ENCODE measurements at regions of chr1 and their contacts with region 1.

Region 1: GRCh38 chr1:67561704-67562113 is 123.3 kb upstream of the GADD45A start:
- DNase-seq: peak; percentile 54 to 98
- H3K4me3 ChIP-seq: no peak overlapping the region
- H3K27ac ChIP-seq: no peak overlapping the region
- H3K4me1 ChIP-seq: no peaks in the 10 kb centered on the region
- H3K27me3 ChIP-seq: no peaks in the 10 kb centered on the region
- CTCF ChIP-seq: peak; percentile 86 to 92 (median 91)
- EP300 ChIP-seq: no peak
- POLR2A ChIP-seq: no peak
- RAD21 ChIP-seq: peak; percentile 94 to 95

Region 2: GRCh38 chr1:67323087-67323486 is 238.6 kb before region 1 on chr1:
- CTCF ChIA-PET with region 1: no interaction called
- POLR2A ChIA-PET with region 1: no interaction called
- DNase-seq: no peak
- H3K4me3 ChIP-seq: no peak overlapping the region
- H3K27ac ChIP-seq: no peak overlapping the region
- H3K4me1 ChIP-seq: peaks cover 0 to 3% (median 0%) of the 10 kb centered on the region in 4 experiments; a peak in 1 of 7 replicates
- H3K27me3 ChIP-seq: no peaks in the 10 kb centered on the region
- CTCF ChIP-seq: no peak
- EP300 ChIP-seq: no peak
- POLR2A ChIP-seq: no peak
- RAD21 ChIP-seq: no peak

Region 3: GRCh38 chr1:67524143-67525052 is 37.3 kb before region 1 on chr1:
- CTCF ChIA-PET with region 1: interaction called, 24 read pairs
- POLR2A ChIA-PET with region 1: no interaction called
- DNase-seq: no peak
- H3K4me3 ChIP-seq: no peak overlapping the region
- H3K27ac ChIP-seq: no peak overlapping the region
- H3K4me1 ChIP-seq: no peaks in the 10 kb centered on the region
- H3K27me3 ChIP-seq: peaks cover 14 to 36% (median 22%) of the 10 kb centered on the region in 4 experiments
- CTCF ChIP-seq: peak in 2 of 3 experiments; percentile 5 to 48; a peak in 2 of 4 replicates
- EP300 ChIP-seq: no peak
- POLR2A ChIP-seq: no peak
- RAD21 ChIP-seq: peak in 1 of 2 experiments; percentile 32; a peak in 1 of 4 replicates

Region 4: GRCh38 chr1:67540733-67541125 is 21.0 kb before region 1 on chr1:
- CTCF ChIA-PET with region 1: interaction called, 214 read pairs
- POLR2A ChIA-PET with region 1: no interaction called
- DNase-seq: no peak
- H3K4me3 ChIP-seq: no peak overlapping the region
- H3K27ac ChIP-seq: no peak overlapping the region
- H3K4me1 ChIP-seq: no peaks in the 10 kb centered on the region
- H3K27me3 ChIP-seq: no peaks in the 10 kb centered on the region
- CTCF ChIP-seq: no peak
- EP300 ChIP-seq: no peak
- POLR2A ChIP-seq: no peak
- RAD21 ChIP-seq: no peak

Region 5: DNA sequence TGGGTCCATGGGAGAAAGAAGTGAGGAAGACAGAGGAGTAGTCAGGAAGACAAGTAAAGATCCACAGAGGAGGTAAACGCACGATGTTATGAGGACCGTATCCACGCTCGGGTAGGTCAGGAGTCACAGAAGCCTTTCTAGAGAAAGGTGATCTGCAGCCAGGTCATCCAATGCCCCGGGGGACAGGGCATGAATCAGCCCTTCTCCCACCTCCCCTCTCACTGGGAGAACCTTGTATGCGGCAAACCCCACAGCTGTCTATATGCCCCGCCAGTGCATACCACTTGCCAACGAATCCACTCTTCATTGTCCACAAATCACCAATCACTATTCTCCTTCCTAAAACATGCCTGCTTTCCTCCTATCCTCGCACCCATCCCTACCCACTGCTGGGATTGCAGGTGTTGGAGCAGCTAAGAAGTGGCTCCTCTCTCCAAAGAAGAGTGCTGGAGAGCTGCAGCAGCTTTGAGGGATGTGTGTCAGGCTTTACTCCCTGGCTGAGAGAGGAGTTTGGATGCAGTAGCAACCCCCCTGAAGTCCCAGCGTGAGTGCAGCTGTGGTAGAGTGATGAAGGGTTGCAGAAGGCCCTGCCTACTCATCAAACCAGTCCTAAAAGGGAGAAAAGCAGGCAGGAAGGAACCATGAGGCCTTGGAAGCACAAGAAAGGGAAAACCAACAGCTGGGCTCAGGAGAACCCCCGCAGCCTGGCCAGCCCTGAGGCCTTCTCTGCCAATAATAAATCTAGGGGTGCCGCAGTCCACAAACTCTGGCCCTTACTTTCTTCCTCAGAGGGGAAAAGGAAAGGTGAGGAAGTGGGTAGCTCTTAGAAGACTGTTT is 21.1 kb after region 1 on chr1:
- CTCF ChIA-PET with region 1: interaction called, 34 read pairs
- POLR2A ChIA-PET with region 1: no interaction called
- DNase-seq: no peak
- H3K4me3 ChIP-seq: no peak overlapping the region
- H3K27ac ChIP-seq: no peak overlapping the region
- H3K4me1 ChIP-seq: 0 out of 7 replicates have a peak, but pooled peaks cover 0 to 4% (median 0%) of the 10 kb centered on the region in 4 experiments
- H3K27me3 ChIP-seq: peaks cover 0 to 4% (median 0%) of the 10 kb centered on the region in 4 experiments; a peak in 2 of 7 replicates
- CTCF ChIP-seq: no peak
- EP300 ChIP-seq: no peak
- POLR2A ChIP-seq: no peak
- RAD21 ChIP-seq: no peak

Region 6: GRCh38 chr1:67623906-67624305 is 62.2 kb after region 1 on chr1:
- CTCF ChIA-PET with region 1: interaction called, 15 read pairs
- POLR2A ChIA-PET with region 1: no interaction called
- DNase-seq: peak in 1 of 2 experiments; percentile 28
- H3K4me3 ChIP-seq: no peak overlapping the region
- H3K27ac ChIP-seq: no peak overlapping the region
- H3K4me1 ChIP-seq: no peaks in the 10 kb centered on the region
- H3K27me3 ChIP-seq: no peaks in the 10 kb centered on the region
- CTCF ChIP-seq: no peak
- EP300 ChIP-seq: no peak
- POLR2A ChIP-seq: no peak
- RAD21 ChIP-seq: no peak

Region 7: GRCh38 chr1:67685067-67685557 is 123.4 kb after region 1 on chr1 and contains the start of gene GADD45A:
- CTCF ChIA-PET with region 1: interaction called, 13 read pairs
- POLR2A ChIA-PET with region 1: interaction called, 15 read pairs
- DNase-seq: peak; percentile 96 to 97
- H3K4me3 ChIP-seq: peak within 1 kb of the TSS; percentile 84 to 98 (median 90)
- H3K27ac ChIP-seq: no peak within 1 kb of the TSS; the same call in 1 of the 2 replicates
- H3K4me1 ChIP-seq: peaks cover 0 to 9% (median 5%) of the 10 kb centered on the region in 4 experiments; a peak in 5 of 7 replicates
- H3K27me3 ChIP-seq: no peaks in the 10 kb centered on the region
- CTCF ChIP-seq: no peak
- EP300 ChIP-seq: peak in 1 of 2 experiments; percentile 32; a peak in 1 of 3 replicates
- POLR2A ChIP-seq: peak; percentile 96 to 98
- RAD21 ChIP-seq: peak; percentile 10; a peak in 1 of 4 replicates
- total RNA-seq, gene GADD45A: 15.5 and 15.6 TPM in 2 replicates

Region 8: GRCh38 chr1:67780637-67781036 is 218.9 kb after region 1 on chr1:
- CTCF ChIA-PET with region 1: interaction called, 11 read pairs
- POLR2A ChIA-PET with region 1: no interaction called
- DNase-seq: no peak
- H3K4me3 ChIP-seq: no peak overlapping the region
- H3K27ac ChIP-seq: no peak overlapping the region
- H3K4me1 ChIP-seq: no peaks in the 10 kb centered on the region
- H3K27me3 ChIP-seq: no peaks in the 10 kb centered on the region
- CTCF ChIP-seq: no peak
- EP300 ChIP-seq: no peak
- POLR2A ChIP-seq: no peak
- RAD21 ChIP-seq: no peak